ENCODE measurements at regions of chr6 and their contacts with region 1.

Region 1: DNA sequence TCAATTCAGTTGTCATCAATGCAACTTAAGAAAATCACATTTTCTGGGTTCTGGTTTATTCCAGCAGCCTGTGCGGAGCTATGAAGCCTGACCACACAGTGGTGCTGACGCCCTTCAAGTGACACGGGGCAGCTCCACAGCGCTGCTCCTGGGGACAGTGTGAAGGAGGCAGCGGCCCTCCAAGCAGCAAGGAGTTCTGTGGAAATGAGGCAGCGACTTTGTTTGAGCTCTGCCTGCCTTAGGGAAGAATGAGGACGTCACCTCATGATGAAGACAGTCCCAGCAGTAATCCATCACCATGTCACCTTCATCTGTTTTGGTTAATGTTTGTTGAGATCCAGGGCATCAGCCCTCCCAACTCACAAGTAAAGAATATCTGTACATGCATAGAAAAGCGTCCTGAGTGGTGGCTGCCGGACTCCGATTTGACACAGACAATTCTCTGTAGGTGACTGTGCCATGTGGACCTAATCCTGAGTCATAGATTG is 168.5 kb upstream of the UST start:
- DNase-seq: peak; percentile 73
- H3K4me3 Mint-ChIP-seq: no peak overlapping the region
- H3K27ac Mint-ChIP-seq: no peak overlapping the region
- H3K4me1 Mint-ChIP-seq: peaks cover 6% of the 10 kb centered on the region
- H3K27me3 Mint-ChIP-seq: peaks cover 27% of the 10 kb centered on the region

Region 2: GRCh38 chr6:148559848-148560433 is 18.3 kb before region 1 on chr6:
- CTCF ChIA-PET with region 1: interaction called, 15 read pairs
- POLR2A ChIA-PET with region 1: no interaction called
- intact Hi-C with region 1: no loop called
- DNase-seq: peak; percentile 77
- H3K4me3 Mint-ChIP-seq: no peak overlapping the region
- H3K27ac Mint-ChIP-seq: no peak overlapping the region
- H3K4me1 Mint-ChIP-seq: peaks cover 7% of the 10 kb centered on the region
- H3K27me3 Mint-ChIP-seq: peaks cover 15% of the 10 kb centered on the region

Region 3: GRCh38 chr6:148700741-148701311 is 122.5 kb after region 1 on chr6:
- CTCF ChIA-PET with region 1: no interaction called
- POLR2A ChIA-PET with region 1: no interaction called
- intact Hi-C with region 1: loop called (anchors 10 kb)
- DNase-seq: no peak
- H3K4me3 Mint-ChIP-seq: peak overlapping the region; percentile 63
- H3K27ac Mint-ChIP-seq: no peak overlapping the region
- H3K4me1 Mint-ChIP-seq: peaks cover 4% of the 10 kb centered on the region
- H3K27me3 Mint-ChIP-seq: peaks cover 2% of the 10 kb centered on the region

Region 4: DNA sequence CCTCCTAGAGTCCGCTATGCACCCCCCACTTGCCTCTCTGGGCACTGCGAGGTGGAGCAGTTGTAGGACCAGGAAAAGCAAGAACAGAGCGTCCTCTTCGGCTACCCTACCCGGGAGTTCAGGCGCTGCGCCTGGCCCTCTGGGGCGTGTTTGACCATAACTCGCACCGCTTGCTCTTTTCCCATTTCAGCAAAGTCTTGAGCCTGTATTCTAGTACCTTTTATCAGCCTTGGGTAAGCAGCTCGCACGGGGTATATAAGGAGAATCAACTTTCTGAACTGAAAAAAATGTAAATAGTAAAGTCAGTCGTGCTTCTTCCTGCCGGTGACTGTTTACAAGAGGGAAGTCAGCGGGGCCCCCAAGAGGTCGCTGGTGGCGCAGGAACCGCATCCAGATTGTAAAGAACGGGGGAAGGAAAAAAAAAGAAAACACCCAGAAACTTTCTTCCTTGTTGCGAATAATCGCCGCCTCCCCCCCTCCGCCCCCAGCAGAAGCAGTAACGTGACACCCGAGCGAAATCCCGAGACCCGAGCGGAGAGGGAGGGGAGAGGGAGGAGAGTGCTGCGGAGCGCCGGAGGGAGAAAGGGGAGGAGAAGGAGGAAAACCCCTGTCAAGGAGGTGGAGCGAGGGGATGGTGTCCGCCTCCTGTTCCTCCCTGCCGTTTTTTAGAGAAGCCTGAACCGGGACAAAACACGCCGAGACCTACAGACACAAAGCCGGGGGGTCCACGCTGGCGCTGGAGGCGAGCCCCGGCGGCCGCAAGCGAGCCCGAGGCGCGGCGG is 168.3 kb after region 1 on chr6 and contains the start of gene UST:
- CTCF ChIA-PET with region 1: interaction called, 3 read pairs
- POLR2A ChIA-PET with region 1: no interaction called
- intact Hi-C with region 1: loop called (anchors 2 kb)
- DNase-seq: peak; percentile 79
- H3K4me3 Mint-ChIP-seq: peak within 1 kb of the TSS; percentile 88
- H3K27ac Mint-ChIP-seq: peak within 1 kb of the TSS; percentile 78
- H3K4me1 Mint-ChIP-seq: peaks cover 28% of the 10 kb centered on the region
- H3K27me3 Mint-ChIP-seq: peaks cover 8% of the 10 kb centered on the region
- total RNA-seq, gene UST: 3.7 to 4.9 TPM

Region 5: DNA sequence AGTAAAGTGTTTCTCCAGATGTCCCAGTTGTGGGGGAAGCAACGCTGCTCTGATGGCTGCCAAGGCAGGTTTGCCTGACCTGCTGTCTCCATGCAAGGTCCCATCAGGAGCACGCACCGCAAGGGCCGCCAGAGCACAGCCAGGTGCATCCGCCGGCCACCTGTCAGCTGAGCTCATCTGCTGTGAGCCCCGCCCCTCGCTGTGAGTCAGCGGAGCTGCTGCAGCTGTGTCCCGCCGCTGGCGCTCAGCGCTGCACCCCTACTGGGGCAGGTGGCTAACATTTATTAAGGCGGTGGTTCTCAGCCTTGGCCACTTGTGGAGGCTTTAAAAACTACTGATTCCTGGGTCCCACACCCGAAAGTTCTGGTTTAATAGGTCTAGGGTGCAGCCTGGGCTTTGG is 394.2 kb after region 1 on chr6:
- CTCF ChIA-PET with region 1: interaction called, 19 read pairs
- POLR2A ChIA-PET with region 1: no interaction called
- intact Hi-C with region 1: no loop called
- DNase-seq: peak; percentile 68
- H3K4me3 Mint-ChIP-seq: no peak overlapping the region
- H3K27ac Mint-ChIP-seq: no peak overlapping the region
- H3K4me1 Mint-ChIP-seq: no peaks in the 10 kb centered on the region
- H3K27me3 Mint-ChIP-seq: no peaks in the 10 kb centered on the region

Measured in activated CD4-positive, alpha-beta memory T cell treated with anti-CD3 and anti-CD28 coated beads for 36 hours (primary cell).